Activated naive CD4-positive, alpha-beta T cell treated with anti-CD3 and anti-CD28 coated beads, Interleukin-2, amount 10 ng/mL, durations not matched to agents 7 days and 5 days (primary cell): ENCODE measurements at regions of chr6 and their contacts with region 1.

Region 1: GRCh38 chr6:35468181-35468979 is at the start of gene RPL10A:
- DNase-seq: peak; percentile 97
- H3K4me3 Mint-ChIP-seq: peak within 1 kb of the TSS; percentile 99
- H3K27ac Mint-ChIP-seq: peak within 1 kb of the TSS; percentile 99
- H3K4me1 Mint-ChIP-seq: peaks cover 41% of the 10 kb centered on the region
- H3K27me3 Mint-ChIP-seq: no peaks in the 10 kb centered on the region

Region 2: GRCh38 chr6:35342258-35343091 is 125.9 kb before region 1 on chr6 and contains the start of gene PPARD:
- CTCF ChIA-PET with region 1: interaction called, 14 read pairs
- DNase-seq: peak; percentile 98
- H3K4me3 Mint-ChIP-seq: peak within 1 kb of the TSS; percentile 95
- H3K27ac Mint-ChIP-seq: peak within 1 kb of the TSS; percentile 86
- H3K4me1 Mint-ChIP-seq: peaks cover 53% of the 10 kb centered on the region
- H3K27me3 Mint-ChIP-seq: peaks cover 7% of the 10 kb centered on the region